Activated CD8-positive, alpha-beta T cell treated with anti-CD3 and anti-CD28 coated beads, Interleukin-2, amount 10 ng/mL, durations not matched to agents 7 days and 5 days (primary cell): ENCODE measurements at regions of chr11 and their contacts with region 1.

Region 1: GRCh38 chr11:95150946-95151684 is 61.5 kb downstream of the ENDOD1 start:
- DNase-seq: peak; percentile 96
- ATAC-seq: peak; percentile 96
- H3K4me3 Mint-ChIP-seq: peak overlapping the region; percentile 82
- H3K27ac Mint-ChIP-seq: peak overlapping the region; percentile 91
- H3K4me1 Mint-ChIP-seq: peaks cover 38% of the 10 kb centered on the region
- H3K27me3 Mint-ChIP-seq: peaks cover 7% of the 10 kb centered on the region

Region 2: GRCh38 chr11:95067039-95067840 is 83.9 kb before region 1 on chr11:
- CTCF ChIA-PET with region 1: interaction called, 107 read pairs
- POLR2A ChIA-PET with region 1: interaction called, 27 read pairs
- DNase-seq: peak; percentile 80
- ATAC-seq: peak; percentile 74
- H3K4me3 Mint-ChIP-seq: peak overlapping the region; percentile 94
- H3K27ac Mint-ChIP-seq: peak overlapping the region; percentile 97
- H3K4me1 Mint-ChIP-seq: peaks cover 25% of the 10 kb centered on the region
- H3K27me3 Mint-ChIP-seq: peaks cover 8% of the 10 kb centered on the region

Region 3: GRCh38 chr11:95089620-95090542 is 61.2 kb before region 1 on chr11 and contains the start of gene ENDOD1:
- CTCF ChIA-PET with region 1: interaction called, 144 read pairs
- POLR2A ChIA-PET with region 1: interaction called, 7 read pairs
- DNase-seq: peak; percentile 88
- ATAC-seq: peak; percentile 96
- H3K4me3 Mint-ChIP-seq: peak within 1 kb of the TSS; percentile 90
- H3K27ac Mint-ChIP-seq: peak within 1 kb of the TSS; percentile 99
- H3K4me1 Mint-ChIP-seq: peaks cover 66% of the 10 kb centered on the region
- H3K27me3 Mint-ChIP-seq: no peaks in the 10 kb centered on the region
- total RNA-seq, gene ENDOD1: 23.4 to 23.9 TPM

Region 4: DNA sequence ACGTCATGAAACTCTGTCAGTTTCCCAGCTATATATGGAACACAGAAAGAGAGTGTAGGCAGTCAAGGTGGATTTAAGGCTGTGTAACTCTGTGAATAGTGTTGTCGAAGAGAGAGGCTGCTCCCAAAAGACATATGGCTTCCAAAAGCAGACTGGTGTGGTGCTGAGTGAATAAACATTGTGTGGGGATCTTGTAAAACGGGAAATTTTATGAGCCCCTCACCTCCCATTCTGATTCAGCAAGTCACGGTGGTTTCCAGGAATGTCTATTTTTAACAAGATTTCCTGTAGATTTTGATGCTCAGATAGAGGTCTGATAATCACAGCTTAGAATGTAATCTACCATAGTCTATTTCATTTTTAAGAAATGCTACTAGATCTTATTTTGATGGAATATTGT is 12.0 kb after region 1 on chr11:
- CTCF ChIA-PET with region 1: interaction called, 12 read pairs
- POLR2A ChIA-PET with region 1: interaction called, 3 read pairs
- DNase-seq: no peak
- ATAC-seq: no peak
- H3K4me3 Mint-ChIP-seq: no peak overlapping the region
- H3K27ac Mint-ChIP-seq: no peak overlapping the region
- H3K4me1 Mint-ChIP-seq: peaks cover 18% of the 10 kb centered on the region
- H3K27me3 Mint-ChIP-seq: no peaks in the 10 kb centered on the region

Region 5: DNA sequence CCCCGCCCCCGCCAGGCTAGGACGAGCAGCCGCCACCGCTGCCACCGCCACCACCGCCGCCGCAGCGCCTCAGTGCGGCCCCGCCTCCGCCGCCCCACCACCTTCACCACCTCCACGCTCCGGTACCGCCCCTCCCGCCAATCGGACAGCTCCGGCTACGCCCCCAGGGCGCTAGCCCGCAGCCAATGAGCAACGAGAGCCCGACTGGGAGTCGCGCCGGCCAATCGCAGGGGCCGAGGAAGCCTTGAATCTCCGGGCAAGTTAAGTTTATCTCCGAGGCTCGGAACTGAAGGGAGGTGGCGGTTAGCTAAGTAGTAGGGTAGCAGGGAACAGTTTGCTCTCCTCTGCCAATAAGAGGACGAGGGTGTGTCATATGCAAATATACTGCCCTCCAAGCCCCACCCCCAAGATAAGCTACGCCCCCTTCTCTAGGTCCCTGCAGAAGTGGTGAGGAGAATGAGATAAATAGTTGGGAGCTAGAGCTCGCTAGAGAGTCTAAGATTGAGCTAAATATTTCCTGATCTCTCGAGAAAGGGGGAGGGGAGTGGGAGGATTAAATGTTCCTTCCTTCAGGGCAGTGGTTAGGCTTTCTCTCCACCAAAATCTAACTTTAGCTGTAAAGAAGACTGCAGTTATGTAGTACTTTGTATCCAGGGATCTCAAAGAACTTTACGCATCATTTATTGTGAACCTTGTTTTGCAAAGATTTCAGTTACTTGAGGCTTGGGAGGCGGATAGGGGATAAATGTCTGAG is 80.2 kb after region 1 on chr11 and contains the start of gene SESN3:
- CTCF ChIA-PET with region 1: interaction called, 72 read pairs
- POLR2A ChIA-PET with region 1: interaction called, 4 read pairs
- DNase-seq: peak; percentile 99
- ATAC-seq: peak; percentile 96
- H3K4me3 Mint-ChIP-seq: no peak within 1 kb of the TSS
- H3K27ac Mint-ChIP-seq: peak within 1 kb of the TSS; percentile 86
- H3K4me1 Mint-ChIP-seq: peaks cover 44% of the 10 kb centered on the region
- H3K27me3 Mint-ChIP-seq: peaks cover 2% of the 10 kb centered on the region
- total RNA-seq, gene SESN3: 29.1 to 31.5 TPM

Region 6: GRCh38 chr11:95729462-95729861 is 578.3 kb after region 1 on chr11:
- CTCF ChIA-PET with region 1: interaction called, 14 read pairs
- POLR2A ChIA-PET with region 1: interaction called, 3 read pairs
- DNase-seq: no peak
- ATAC-seq: no peak
- H3K4me3 Mint-ChIP-seq: no peak overlapping the region
- H3K27ac Mint-ChIP-seq: no peak overlapping the region
- H3K4me1 Mint-ChIP-seq: peaks cover 7% of the 10 kb centered on the region
- H3K27me3 Mint-ChIP-seq: peaks cover 12% of the 10 kb centered on the region

Region 7: DNA sequence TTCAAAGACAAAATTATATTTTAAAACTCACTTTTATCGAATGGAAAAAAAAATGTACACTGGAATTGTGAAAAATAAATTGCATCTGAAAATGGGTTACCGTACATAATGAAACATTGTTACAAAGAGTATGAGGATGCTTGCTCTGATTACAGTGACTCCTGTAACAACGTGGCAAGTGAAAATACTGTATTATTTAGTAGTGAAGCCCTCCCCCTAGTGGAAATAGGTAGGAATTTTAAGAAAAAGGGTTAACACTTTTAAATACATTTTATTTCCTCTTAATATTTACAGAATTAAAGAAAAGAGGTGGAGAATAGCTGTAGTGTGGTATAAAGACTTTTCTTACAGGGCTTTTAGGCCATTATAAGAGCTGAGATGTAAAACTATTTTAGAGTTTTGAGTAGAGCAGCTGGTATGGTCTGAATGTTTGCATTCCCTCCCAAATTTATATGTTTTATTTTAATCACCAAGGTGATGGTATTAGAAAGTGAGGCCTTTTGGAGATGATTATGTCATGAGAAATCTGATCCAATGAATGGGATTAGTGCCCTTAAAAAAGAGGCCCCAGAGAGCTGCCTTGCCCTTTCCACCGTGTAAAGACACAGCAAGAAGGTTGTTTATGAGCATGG is 613.3 kb after region 1 on chr11:
- CTCF ChIA-PET with region 1: interaction called, 294 read pairs
- POLR2A ChIA-PET with region 1: interaction called, 3 read pairs
- DNase-seq: no peak
- ATAC-seq: peak; percentile 84
- H3K4me3 Mint-ChIP-seq: no peak overlapping the region
- H3K27ac Mint-ChIP-seq: no peak overlapping the region
- H3K4me1 Mint-ChIP-seq: no peaks in the 10 kb centered on the region
- H3K27me3 Mint-ChIP-seq: peaks cover 3% of the 10 kb centered on the region